Heart left ventricle (tissue), 16 donors: ENCODE measurements at regions of chr2 and their contacts with region 1.

Region 1: DNA sequence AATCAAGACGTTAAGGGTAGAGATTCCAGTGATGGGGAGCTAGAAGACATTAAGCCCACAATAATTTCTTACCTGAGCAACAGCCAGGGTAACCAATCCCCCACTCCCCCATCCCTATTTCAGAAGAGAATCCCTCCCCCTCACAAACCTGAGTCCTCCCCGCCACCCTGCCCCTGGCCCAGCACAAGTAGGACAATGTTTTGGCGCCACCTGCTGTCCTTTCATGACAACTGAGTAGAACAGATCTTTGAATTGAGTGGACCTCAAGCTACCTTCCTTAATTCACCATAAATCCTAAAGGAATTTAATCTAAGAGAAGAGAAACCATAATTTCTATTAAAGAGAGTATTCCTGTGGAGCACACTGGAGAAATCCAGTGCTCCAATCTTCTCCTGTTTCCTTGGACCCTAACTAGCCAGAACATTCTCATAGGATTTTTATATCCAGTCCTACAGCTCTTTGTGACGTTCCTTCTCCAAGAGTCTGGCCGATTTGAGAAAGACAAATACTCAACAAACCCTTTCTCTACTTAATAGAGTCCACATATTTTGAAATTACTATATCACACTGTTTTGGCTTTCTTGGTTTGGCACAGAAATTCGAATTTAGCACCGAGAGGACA is 41.1 kb downstream of the NHEJ1 start:
- DNase-seq: peak; percentile 57 to 72 (median 62)
- ATAC-seq: peak in 3 of 4 donors; percentile 67 to 79 (median 71)
- H3K4me3 ChIP-seq: no peak overlapping the region
- H3K27ac ChIP-seq: no peak overlapping the region
- H3K4me1 ChIP-seq: peaks cover 0 to 21% (median 9%) of the 10 kb centered on the region in 12 donors
- H3K27me3 ChIP-seq: no peaks in the 10 kb centered on the region
- CTCF ChIP-seq: peak; percentile 51 to 84 (median 72)
- POLR2A ChIP-seq: no peak

Region 2: GRCh38 chr2:218876562-218877219 is 242.8 kb before region 1 on chr2:
- intact Hi-C with region 1: loop called in 1 of 10 experiments (anchors 10 kb)
- DNase-seq: peak in 4 of 5 donors; percentile 46 to 62 (median 53)
- ATAC-seq: peak in 3 of 4 donors; percentile 9 to 50 (median 48)
- H3K4me3 ChIP-seq: no peak overlapping the region
- H3K27ac ChIP-seq: no peak overlapping the region
- H3K4me1 ChIP-seq: peaks cover 0 to 32% (median 10%) of the 10 kb centered on the region in 12 donors
- H3K27me3 ChIP-seq: peaks cover 48 to 100% (median 89%) of the 10 kb centered on the region in 9 donors
- CTCF ChIP-seq: peak; percentile 84 to 96 (median 92)
- POLR2A ChIP-seq: no peak

Region 3: GRCh38 chr2:218927422-218927821 is 192.1 kb before region 1 on chr2:
- intact Hi-C with region 1: no loop called
- DNase-seq: no peak
- ATAC-seq: peak in 1 of 4 donors; percentile 39
- H3K4me3 ChIP-seq: no peak overlapping the region
- H3K27ac ChIP-seq: no peak overlapping the region
- H3K4me1 ChIP-seq: no peaks in the 10 kb centered on the region
- H3K27me3 ChIP-seq: peaks cover 0 to 35% (median 5%) of the 10 kb centered on the region in 9 donors
- CTCF ChIP-seq: no peak
- POLR2A ChIP-seq: no peak

Region 4: DNA sequence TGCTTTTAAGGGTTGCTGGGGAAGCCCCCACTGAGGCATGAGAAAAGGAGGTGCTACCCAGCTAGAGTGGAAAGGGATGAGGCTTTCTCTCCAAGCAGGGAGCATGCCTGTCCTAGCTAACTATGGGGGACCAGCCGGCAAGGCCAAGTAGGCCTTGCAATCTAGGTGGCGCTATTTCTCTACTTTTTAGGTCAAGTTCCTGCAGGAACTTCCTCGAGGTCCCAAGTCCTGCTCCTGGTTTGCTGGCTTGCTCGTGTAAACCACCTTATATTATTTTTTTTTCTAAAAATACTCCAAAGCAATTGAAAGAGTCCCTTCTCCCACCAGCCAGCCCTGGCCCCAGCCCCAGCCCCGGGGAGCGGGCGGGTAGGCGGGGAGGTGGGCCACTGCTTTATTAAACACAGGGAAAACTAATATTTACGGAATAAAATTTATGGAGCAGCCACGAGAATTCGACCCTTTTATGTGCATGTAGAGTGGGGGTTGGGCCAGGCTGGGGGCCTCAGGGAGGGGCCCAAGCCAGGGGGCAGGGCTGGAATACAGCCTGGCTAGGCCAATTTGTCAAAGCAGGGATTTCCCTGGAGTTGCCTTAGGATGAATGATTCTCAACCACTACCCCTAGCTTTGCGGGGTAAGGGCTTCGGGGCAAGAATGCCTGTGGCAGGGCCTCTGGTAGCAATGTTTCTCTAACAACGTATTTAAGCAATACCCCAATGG is 46.0 kb before region 1 on chr2:
- intact Hi-C with region 1: loop called in 9 of 10 experiments (anchors 2 to 5 kb)
- DNase-seq: no peak
- ATAC-seq: no peak
- H3K4me3 ChIP-seq: no peak overlapping the region
- H3K27ac ChIP-seq: no peak overlapping the region
- H3K4me1 ChIP-seq: peaks cover 0 to 12% (median 0%) of the 10 kb centered on the region in 12 donors
- H3K27me3 ChIP-seq: no peaks in the 10 kb centered on the region
- CTCF ChIP-seq: peak; percentile 38 to 62 (median 54)
- POLR2A ChIP-seq: no peak

Region 5: DNA sequence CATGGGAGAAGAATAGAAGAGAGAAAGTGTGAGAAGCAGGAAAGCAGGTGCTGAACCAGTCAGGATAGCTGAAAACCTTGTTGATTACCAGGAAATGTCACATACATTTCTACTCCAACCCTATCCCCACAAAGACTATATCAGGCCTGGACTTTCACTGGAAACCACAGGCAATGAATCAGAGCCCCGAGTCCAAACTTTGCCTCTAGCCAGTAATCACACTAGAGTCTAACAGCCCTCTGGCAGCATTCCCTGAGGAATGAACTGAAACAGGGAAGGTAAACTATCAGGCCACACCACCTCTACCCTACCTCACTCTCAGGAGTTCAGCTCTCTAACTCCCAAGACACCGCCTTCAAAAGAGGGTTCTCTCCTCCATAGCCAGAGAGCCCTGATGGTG is 40.1 kb before region 1 on chr2:
- intact Hi-C with region 1: loop called in 7 of 10 experiments (anchors 2 to 5 kb)
- DNase-seq: no peak
- ATAC-seq: no peak
- H3K4me3 ChIP-seq: no peak overlapping the region
- H3K27ac ChIP-seq: no peak overlapping the region
- H3K4me1 ChIP-seq: peaks cover 0 to 32% (median 11%) of the 10 kb centered on the region in 12 donors
- H3K27me3 ChIP-seq: no peaks in the 10 kb centered on the region
- CTCF ChIP-seq: no peak
- POLR2A ChIP-seq: no peak

Region 6: GRCh38 chr2:219294356-219295351 is 175.1 kb after region 1 on chr2:
- intact Hi-C with region 1: no loop called
- DNase-seq: peak; percentile 83 to 93 (median 89)
- ATAC-seq: peak; percentile 48 to 92 (median 89)
- H3K4me3 ChIP-seq: peak overlapping the region; percentile 22 to 77 (median 64)
- H3K27ac ChIP-seq: peak overlapping the region; percentile 11 to 93 (median 78)
- H3K4me1 ChIP-seq: peaks cover 0 to 24% (median 11%) of the 10 kb centered on the region in 12 donors
- H3K27me3 ChIP-seq: peaks cover 0 to 8% (median 0%) of the 10 kb centered on the region in 9 donors
- CTCF ChIP-seq: peak in 11 of 12 donors; percentile 99 to 100 (median 100)
- POLR2A ChIP-seq: peak in 1 of 2 donors; percentile 66

Region 7: GRCh38 chr2:219603771-219604170 is 484.2 kb after region 1 on chr2:
- intact Hi-C with region 1: no loop called
- DNase-seq: no peak
- ATAC-seq: no peak
- H3K4me3 ChIP-seq: no peak overlapping the region
- H3K27ac ChIP-seq: peak overlapping the region in 1 of 12 donors; percentile 38
- H3K4me1 ChIP-seq: peaks cover 0 to 10% (median 0%) of the 10 kb centered on the region in 12 donors
- H3K27me3 ChIP-seq: no peaks in the 10 kb centered on the region
- CTCF ChIP-seq: no peak
- POLR2A ChIP-seq: no peak

Region 8: DNA sequence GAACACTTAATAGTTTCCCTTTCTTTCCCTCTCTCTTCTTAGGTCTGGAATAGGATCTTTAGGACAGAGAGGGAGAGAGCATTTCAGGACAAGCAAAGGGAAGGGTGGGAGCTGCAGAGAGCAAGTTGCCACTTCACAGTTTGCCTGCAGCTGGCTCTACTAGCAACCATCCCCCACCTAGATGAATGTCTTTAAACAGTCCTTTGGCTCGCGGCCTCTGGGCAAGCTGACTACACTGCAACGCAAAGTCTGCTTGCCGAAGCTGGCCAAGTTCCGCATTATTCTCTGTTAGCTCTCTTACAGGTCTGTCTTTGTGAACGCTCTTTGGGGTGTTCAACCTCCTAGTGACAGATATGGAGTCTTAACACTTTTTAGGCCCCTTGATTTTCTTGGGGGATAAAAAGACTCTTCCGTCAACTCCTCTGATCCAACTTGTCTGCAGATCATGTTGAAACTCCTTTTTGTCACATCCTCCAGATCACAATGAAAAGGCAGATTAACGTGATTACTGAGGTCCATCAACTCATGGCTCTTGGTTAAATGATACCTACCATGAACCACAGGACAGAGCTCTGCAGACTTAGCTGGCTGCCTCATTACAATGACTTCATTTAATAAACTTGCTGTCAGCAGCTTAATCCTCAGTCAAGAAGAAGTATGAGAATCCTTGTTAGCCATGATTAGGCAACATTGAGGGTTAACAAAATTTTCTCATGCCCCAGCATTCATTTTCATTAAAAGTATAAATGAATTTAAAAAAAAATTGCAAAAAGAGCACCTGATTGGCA is 582.5 kb after region 1 on chr2:
- intact Hi-C with region 1: no loop called
- DNase-seq: peak; percentile 28 to 74 (median 66)
- ATAC-seq: peak; percentile 49 to 62 (median 56)
- H3K4me3 ChIP-seq: no peak overlapping the region
- H3K27ac ChIP-seq: peak overlapping the region in 8 of 12 donors; percentile 11 to 59 (median 45)
- H3K4me1 ChIP-seq: peaks cover 0 to 45% (median 12%) of the 10 kb centered on the region in 12 donors
- H3K27me3 ChIP-seq: peaks cover 0 to 2% (median 0%) of the 10 kb centered on the region in 9 donors
- CTCF ChIP-seq: no peak
- POLR2A ChIP-seq: no peak